ENCODE measurements at regions of chr11 and their contacts with region 1.

Region 1: GRCh38 chr11:131327421-131327820 is 43.0 kb upstream of the NTM start:
- DNase-seq: no peak
- ATAC-seq: no peak
- H3K4me3 Mint-ChIP-seq: no peak overlapping the region
- H3K27ac Mint-ChIP-seq: no peak overlapping the region
- H3K4me1 Mint-ChIP-seq: peaks cover 15% of the 10 kb centered on the region
- H3K27me3 Mint-ChIP-seq: no peaks in the 10 kb centered on the region
- CTCF ChIP-seq: no peak

Region 2: DNA sequence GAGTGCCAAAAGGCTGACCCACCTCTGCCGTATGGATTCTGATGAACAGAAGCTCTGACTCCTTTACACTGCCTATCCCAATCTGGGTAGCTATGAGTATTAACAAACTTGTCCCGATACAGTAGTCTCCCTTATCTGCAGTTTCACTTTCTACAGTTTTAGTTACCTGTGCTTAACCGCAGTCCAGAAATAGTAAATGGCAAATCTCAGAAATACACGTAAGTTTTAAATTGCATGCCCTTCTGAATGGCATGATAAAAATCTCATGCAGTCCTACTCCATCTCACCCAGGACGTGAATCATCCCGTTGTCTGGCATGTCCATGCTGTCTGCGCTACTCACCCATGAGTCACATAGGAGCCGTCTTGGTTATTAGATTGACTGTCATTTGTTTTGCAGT is 479.9 kb before region 1 on chr11:
- CTCF ChIA-PET with region 1: no interaction called
- POLR2A ChIA-PET with region 1: no interaction called
- DNase-seq: no peak
- ATAC-seq: no peak
- H3K4me3 Mint-ChIP-seq: no peak overlapping the region
- H3K27ac Mint-ChIP-seq: no peak overlapping the region
- H3K4me1 Mint-ChIP-seq: peaks cover 3% of the 10 kb centered on the region
- H3K27me3 Mint-ChIP-seq: peaks cover 6% of the 10 kb centered on the region
- CTCF ChIP-seq: no peak

Region 3: GRCh38 chr11:131217313-131218310 is 109.8 kb before region 1 on chr11:
- CTCF ChIA-PET with region 1: no interaction called
- POLR2A ChIA-PET with region 1: interaction called, 10 read pairs
- DNase-seq: no peak
- ATAC-seq: peak; percentile 60
- H3K4me3 Mint-ChIP-seq: no peak overlapping the region
- H3K27ac Mint-ChIP-seq: peak overlapping the region; percentile 29; the same call in 1 of the 2 replicates
- H3K4me1 Mint-ChIP-seq: peaks cover 72% of the 10 kb centered on the region
- H3K27me3 Mint-ChIP-seq: peaks cover 3% of the 10 kb centered on the region; the same call in 1 of the 2 replicates
- CTCF ChIP-seq: no peak

Region 4: DNA sequence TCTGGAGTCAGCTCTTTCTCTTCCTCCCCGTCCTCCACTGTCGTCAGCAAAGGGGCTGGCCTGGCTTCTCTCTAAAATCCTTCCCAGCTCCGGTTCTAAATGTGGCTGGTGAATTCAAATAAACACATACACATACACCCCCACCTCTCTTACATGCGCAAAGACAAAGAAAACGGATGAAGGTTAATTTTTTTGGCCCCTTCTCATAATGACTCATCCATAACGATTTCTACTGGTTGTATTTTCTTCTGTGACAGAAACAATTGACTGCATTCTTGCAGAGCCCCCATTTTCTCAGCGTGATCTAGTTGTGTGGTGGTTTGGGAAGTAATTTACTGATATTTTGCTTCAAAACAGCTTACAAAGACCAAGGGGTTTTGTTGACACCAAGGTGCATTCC is 87.0 kb before region 1 on chr11:
- CTCF ChIA-PET with region 1: no interaction called
- POLR2A ChIA-PET with region 1: no interaction called
- DNase-seq: no peak
- ATAC-seq: no peak
- H3K4me3 Mint-ChIP-seq: no peak overlapping the region
- H3K27ac Mint-ChIP-seq: no peak overlapping the region
- H3K4me1 Mint-ChIP-seq: peaks cover 11% of the 10 kb centered on the region
- H3K27me3 Mint-ChIP-seq: peaks cover 3% of the 10 kb centered on the region; the same call in 1 of the 2 replicates
- CTCF ChIP-seq: no peak

Region 5: DNA sequence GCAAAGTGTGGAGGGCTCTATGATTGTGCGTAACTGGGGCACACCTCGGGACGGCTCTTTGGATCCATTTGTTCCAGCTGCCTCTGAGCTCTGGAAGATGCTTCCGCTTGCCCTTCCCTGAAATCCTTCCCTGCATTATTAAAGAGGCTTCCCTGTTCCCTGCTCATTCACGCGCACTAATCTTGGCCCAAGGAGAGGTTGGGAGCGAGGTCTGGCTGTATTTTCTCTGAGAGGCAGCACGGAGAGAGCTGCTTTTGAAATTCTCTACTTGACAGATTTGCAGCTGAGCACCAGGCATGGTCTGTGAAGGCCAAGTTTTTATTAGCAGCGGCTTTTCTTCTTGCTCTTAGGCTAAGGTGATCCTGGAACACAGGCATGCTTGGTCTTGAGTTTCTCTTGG is 51.8 kb before region 1 on chr11:
- CTCF ChIA-PET with region 1: no interaction called
- POLR2A ChIA-PET with region 1: no interaction called
- DNase-seq: no peak
- ATAC-seq: peak; percentile 48
- H3K4me3 Mint-ChIP-seq: no peak overlapping the region
- H3K27ac Mint-ChIP-seq: peak overlapping the region; percentile 77
- H3K4me1 Mint-ChIP-seq: peaks cover 60% of the 10 kb centered on the region
- H3K27me3 Mint-ChIP-seq: no peaks in the 10 kb centered on the region
- CTCF ChIP-seq: no peak

Region 6: DNA sequence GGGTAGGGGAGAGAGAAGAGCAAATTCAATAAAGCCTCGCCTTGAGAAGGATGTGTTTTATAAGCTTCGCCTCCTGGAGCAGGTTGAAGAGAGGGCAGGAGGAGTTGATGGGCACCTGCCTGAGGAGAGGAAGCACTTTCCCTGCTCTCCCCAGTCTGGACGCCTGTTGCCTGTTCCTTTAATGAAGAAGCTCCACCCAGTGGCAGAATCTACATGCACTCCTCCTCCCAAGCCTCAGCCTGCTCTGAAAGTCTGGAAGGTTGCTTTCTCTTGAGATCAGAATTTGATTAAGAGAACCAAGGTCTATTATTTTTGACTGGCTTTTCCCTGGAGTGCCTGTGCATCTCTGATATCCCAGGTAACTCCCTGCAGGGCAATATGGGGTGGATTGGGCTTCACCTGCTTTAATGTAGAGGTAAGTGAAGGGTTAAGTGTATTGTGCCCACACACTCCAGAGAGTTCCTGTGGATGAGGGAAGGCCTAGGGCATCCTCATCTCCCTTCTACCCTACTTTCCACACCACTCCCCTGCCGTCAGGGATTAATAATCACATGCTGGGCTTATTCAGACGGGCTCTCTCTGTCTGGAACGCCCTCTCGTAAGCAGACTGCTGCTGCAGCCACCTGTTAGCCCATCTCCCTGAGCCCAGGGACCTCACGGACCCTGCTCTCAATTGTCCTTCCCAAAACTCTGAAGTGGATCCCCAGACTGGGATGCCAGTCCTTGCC is 65.3 kb after region 1 on chr11:
- CTCF ChIA-PET with region 1: no interaction called
- POLR2A ChIA-PET with region 1: interaction called, 10 read pairs
- DNase-seq: peak; percentile 46
- ATAC-seq: peak; percentile 95
- H3K4me3 Mint-ChIP-seq: no peak overlapping the region
- H3K27ac Mint-ChIP-seq: no peak overlapping the region
- H3K4me1 Mint-ChIP-seq: peaks cover 31% of the 10 kb centered on the region
- H3K27me3 Mint-ChIP-seq: peaks cover 3% of the 10 kb centered on the region; the same call in 1 of the 2 replicates
- CTCF ChIP-seq: no peak

Region 7: GRCh38 chr11:131504199-131504949 is 177.0 kb after region 1 on chr11:
- CTCF ChIA-PET with region 1: no interaction called
- POLR2A ChIA-PET with region 1: no interaction called
- DNase-seq: peak; percentile 78
- ATAC-seq: peak; percentile 99
- H3K4me3 Mint-ChIP-seq: no peak overlapping the region
- H3K27ac Mint-ChIP-seq: 0 out of 2 replicates have a peak overlapping the region, but pooled peaks have one; percentile 26
- H3K4me1 Mint-ChIP-seq: peaks cover 18% of the 10 kb centered on the region
- H3K27me3 Mint-ChIP-seq: no peaks in the 10 kb centered on the region
- CTCF ChIP-seq: peak; percentile 36

Measured in WTC11 (cell line).